Ascending aorta (tissue), 2 donors: ENCODE measurements at regions of chr3 and their contacts with region 1.

Region 1: DNA sequence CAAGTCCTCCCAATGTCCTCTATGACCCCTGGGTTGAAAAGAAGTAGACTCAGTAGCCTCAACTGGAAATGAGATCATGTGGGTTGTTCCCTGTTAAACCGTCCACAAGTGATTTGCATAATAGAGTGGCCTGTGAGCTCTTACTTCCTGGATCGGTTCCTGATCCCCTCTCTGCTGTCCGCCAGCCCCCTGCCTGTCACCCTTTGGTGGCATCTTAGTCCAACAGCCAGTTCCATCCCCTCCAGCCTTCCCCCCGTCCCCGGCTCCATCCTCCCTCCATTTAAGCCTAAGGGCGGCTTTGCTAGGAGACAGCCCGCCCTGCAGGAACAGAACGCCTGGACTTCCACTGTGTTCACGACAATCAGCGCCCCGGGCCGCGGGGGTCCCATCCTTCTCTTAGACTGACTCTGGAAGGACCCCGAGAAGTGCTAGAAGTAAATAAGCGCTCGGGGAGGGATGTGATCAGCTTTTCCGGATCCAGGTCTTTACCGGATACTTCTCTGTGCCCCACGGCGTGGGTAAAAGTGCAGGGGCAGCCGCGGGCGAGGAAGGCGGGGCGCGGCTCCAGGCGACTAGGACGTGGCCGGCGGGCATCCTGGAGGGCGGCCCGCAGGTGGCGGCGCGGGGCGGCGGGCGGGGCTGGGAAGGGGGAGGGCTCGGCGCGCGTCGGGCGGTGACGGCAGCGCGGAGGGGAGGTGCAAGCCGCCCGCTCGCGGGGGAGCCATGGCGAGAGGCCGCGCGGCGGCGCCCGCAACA is 51.2 kb upstream of the ULK4 start:
- DNase-seq: peak in 1 of 2 donors; percentile 83
- H3K4me3 ChIP-seq: peak overlapping the region; percentile 64 to 82
- H3K27ac ChIP-seq: peak overlapping the region; percentile 74 to 83
- H3K4me1 ChIP-seq: peaks cover 0 to 11% of the 10 kb centered on the region in 2 donors
- H3K27me3 ChIP-seq: no peaks in the 10 kb centered on the region
- CTCF ChIP-seq: no peak

Region 2: GRCh38 chr3:41893977-41894376 is 119.1 kb before region 1 on chr3:
- intact Hi-C with region 1: loop called (anchors 10 kb)
- DNase-seq: no peak
- H3K4me3 ChIP-seq: no peak overlapping the region
- H3K27ac ChIP-seq: no peak overlapping the region
- H3K4me1 ChIP-seq: no peaks in the 10 kb centered on the region
- H3K27me3 ChIP-seq: no peaks in the 10 kb centered on the region
- CTCF ChIP-seq: peak; percentile 37 to 54 (median 43)

Region 3: DNA sequence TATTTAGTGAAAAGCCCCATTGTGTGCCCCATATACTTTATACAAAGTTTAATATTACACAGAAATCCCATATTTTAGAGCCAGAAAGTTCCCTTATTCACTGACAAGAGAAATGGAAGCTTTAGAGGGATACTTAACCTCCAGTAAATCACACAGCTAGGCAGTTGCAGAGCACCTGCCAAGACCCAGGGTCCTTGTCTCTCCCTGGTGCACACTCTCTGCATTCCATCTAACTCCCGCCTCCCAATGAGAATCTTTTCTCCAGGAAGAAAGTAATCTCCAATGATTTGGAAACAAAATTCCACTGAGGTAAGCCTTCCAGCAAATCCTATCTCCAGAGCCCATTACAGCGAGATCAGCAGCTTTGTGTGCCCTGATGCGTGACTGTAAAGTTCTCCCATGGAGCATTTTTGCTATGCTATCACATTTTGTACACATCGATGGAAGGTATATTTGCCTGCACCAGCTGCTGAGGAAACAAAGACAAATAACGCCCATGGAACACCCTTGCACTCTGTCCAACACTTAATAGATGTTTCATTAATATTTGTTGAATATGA is 92.6 kb before region 1 on chr3:
- intact Hi-C with region 1: no loop called
- DNase-seq: no peak
- H3K4me3 ChIP-seq: no peak overlapping the region
- H3K27ac ChIP-seq: no peak overlapping the region
- H3K4me1 ChIP-seq: no peaks in the 10 kb centered on the region
- H3K27me3 ChIP-seq: no peaks in the 10 kb centered on the region
- CTCF ChIP-seq: no peak

Region 4: DNA sequence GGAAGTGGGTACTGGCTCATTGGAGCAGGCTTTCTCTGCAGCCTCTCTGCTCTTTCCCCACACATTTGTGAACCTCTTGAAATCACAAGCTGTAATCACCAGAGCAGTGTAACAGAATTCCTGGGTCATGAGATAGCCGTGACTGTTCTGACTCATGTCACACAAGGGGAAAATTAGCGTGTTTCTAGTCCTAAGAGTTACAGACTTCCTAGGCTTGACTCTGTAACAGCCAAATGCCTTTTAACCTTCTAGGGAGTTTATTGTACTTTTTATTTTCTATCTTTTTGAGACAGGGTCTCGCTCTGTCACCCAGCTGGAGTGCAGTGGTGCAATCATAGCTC is 23.3 kb after region 1 on chr3:
- intact Hi-C with region 1: loop called (anchors 2 kb)
- DNase-seq: peak in 1 of 2 donors; percentile 80
- H3K4me3 ChIP-seq: no peak overlapping the region
- H3K27ac ChIP-seq: peak overlapping the region; percentile 67 to 81
- H3K4me1 ChIP-seq: peaks cover 15 to 53% of the 10 kb centered on the region in 2 donors
- H3K27me3 ChIP-seq: no peaks in the 10 kb centered on the region
- CTCF ChIP-seq: no peak

Region 5: GRCh38 chr3:42052484-42053351 is 39.6 kb after region 1 on chr3:
- intact Hi-C with region 1: loop called (anchors 5 kb)
- DNase-seq: no peak
- H3K4me3 ChIP-seq: peak overlapping the region in 1 of 2 donors; percentile 6
- H3K27ac ChIP-seq: peak overlapping the region; percentile 63 to 81
- H3K4me1 ChIP-seq: peaks cover 4 to 25% of the 10 kb centered on the region in 2 donors
- H3K27me3 ChIP-seq: no peaks in the 10 kb centered on the region
- CTCF ChIP-seq: peak in 1 of 3 experiments; percentile 34

Region 6: GRCh38 chr3:42061713-42062408 is 48.7 kb after region 1 on chr3:
- intact Hi-C with region 1: loop called (anchors 2 kb)
- DNase-seq: peak in 1 of 2 donors; percentile 90
- H3K4me3 ChIP-seq: peak overlapping the region in 1 of 2 donors; percentile 41
- H3K27ac ChIP-seq: peak overlapping the region; percentile 74 to 79
- H3K4me1 ChIP-seq: peaks cover 3 to 25% of the 10 kb centered on the region in 2 donors
- H3K27me3 ChIP-seq: no peaks in the 10 kb centered on the region
- CTCF ChIP-seq: no peak

Region 7: DNA sequence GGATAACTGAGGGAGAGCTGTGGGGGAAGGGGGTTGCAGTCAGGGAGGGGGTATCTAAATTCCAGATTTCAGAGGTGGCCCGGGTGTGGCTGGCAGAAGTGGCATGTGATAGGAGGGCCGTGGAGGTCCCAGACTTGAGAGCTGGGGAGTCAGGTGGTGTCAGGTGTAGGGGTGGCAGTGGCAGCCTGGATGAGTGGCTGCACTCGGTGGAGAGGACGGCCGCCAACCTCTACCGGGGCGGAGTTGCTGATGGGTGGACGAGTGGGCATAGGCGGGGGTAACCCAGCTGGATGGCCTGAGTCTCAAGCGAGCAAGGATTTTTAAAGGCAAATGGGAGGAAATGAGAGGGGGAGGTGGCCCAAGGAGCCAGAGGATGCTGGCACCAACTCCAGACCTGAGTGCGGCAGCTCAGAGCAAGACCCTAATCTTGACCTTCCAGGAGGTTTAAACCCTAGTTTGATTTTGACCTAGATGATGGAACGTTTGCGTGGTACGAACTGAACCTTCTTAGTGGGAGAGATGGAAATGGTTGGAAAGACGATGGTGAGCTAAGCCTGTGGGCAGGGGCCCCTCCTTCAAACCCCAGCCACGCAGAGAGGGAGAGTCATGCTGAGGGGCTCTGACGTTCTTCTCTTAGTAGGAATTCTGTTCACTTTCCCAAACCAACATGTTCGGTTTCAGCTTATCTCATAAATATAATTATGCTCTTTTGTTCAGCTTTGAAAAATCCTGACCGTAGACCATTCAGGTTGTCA is 86.1 kb after region 1 on chr3:
- intact Hi-C with region 1: loop called (anchors 2 kb)
- DNase-seq: peak in 1 of 2 donors; percentile 63
- H3K4me3 ChIP-seq: no peak overlapping the region
- H3K27ac ChIP-seq: peak overlapping the region in 1 of 2 donors; percentile 42
- H3K4me1 ChIP-seq: peaks cover 10 to 41% of the 10 kb centered on the region in 2 donors
- H3K27me3 ChIP-seq: no peaks in the 10 kb centered on the region
- CTCF ChIP-seq: no peak